GM13977 (cell line): ENCODE measurements at regions of chr5 and their contacts with region 1.

Region 1: GRCh38 chr5:157948738-157949410 is 89.9 kb upstream of the CLINT1 start:
- DNase-seq: peak; percentile 73
- CTCF ChIP-seq: peak; percentile 83

Region 2: GRCh38 chr5:156753846-156754245 is 1195.0 kb before region 1 on chr5:
- in situ Hi-C with region 1: no loop called
- DNase-seq: no peak
- CTCF ChIP-seq: no peak

Region 3: DNA sequence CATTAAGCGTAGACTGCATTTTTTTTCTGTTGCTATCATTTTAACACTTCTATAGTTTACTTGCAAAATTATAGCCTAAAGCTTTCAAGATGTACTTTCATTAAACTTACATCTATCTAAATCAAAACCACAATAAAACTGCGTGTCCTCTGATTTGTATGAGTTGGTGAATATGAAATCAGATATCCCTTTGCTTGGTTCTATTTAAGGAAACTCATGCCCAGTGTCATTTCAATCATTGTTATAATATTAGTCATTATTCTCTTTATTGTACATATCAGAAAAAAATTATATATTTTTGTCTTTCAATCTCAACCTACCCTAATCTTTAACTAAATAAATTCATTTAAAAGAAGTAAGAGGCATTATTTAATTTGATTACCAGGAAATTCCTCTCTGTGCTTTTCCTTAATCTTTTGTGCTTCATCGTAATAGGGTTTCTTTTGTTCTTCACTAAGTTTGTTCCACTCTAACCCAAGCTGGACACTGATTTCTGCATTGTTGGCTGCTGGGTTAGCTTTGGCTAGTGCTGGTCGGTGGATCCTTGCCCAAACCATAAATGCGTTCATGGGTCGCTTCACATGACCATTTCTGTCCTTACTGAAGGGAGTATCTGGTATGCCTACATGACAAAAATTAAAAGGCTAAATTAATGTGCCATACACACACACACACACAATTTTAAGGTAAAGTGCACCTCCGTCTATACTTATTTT is 300.4 kb before region 1 on chr5:
- in situ Hi-C with region 1: no loop called
- DNase-seq: no peak
- CTCF ChIP-seq: no peak

Region 4: DNA sequence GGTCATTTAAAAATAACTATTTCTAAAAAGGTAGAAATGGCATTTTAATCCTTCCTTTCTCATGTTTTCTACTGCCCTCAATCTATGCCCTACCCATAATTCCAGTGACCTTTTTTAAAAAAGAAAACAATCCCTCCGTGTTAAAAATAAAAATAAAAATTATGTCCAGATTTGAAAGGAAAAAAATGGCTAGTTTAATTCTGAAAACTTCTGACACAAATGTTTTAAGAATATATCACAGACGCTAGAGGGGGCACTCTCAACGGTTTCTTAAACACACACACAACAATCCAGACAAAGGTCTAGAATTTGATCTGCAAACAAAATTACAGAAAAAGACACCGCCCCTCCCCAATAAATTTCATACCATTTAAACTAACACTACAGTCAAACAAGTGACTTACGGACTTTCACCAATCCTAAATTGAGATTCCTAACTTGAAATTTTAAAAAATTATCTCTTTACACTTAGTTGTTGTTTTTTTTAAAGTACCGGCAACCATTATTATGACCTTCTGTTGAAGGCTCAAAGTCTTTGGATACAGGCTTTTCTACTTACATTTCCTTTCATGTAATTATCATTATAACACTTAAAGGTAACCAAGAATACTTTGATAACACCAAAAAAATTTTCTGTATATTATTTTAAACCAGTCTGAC is 128.2 kb before region 1 on chr5:
- in situ Hi-C with region 1: loop called (anchors 25 kb)
- DNase-seq: peak; percentile 18
- CTCF ChIP-seq: peak; percentile 51

Region 5: GRCh38 chr5:158100373-158100888 is 151.6 kb after region 1 on chr5:
- in situ Hi-C with region 1: no loop called
- DNase-seq: no peak
- CTCF ChIP-seq: no peak